ENCODE measurements at regions of chr19 and their contacts with region 1.

Region 1: DNA sequence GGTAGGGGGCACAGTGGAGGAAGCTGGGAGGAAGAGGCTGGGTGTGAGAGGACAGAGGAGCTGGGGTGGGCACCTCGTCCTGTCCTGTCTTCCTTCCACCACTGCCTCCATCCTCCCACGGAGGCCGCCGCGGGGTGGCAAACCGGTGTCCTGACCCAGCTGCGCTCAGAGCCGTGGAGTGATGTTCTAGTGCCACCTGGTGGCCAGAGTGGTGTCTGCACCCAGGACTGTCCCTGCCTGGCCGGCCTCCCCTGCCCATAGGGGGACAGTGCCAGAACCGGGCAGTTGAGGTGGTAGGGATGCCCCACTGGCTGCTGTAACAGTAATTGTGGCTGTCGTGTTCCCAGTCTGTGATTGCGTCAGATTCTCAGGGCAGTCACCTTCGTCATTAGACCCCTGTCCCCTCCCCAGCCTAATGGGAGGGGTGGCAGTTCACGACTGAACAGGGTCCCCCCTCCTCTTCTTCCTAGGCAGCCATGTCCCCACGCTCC is 11.1 kb upstream of the ARRDC2 start:
- DNase-seq: peak; percentile 67 to 96 (median 89)

Region 2: GRCh38 chr19:17938092-17938845 is 58.6 kb before region 1 on chr19:
- intact Hi-C with region 1: loop called (anchors 2 kb)
- DNase-seq: peak; percentile 68 to 93 (median 84)

Region 3: GRCh38 chr19:17947815-17948513 is 48.9 kb before region 1 on chr19:
- intact Hi-C with region 1: loop called (anchors 2 kb)
- DNase-seq: peak; percentile 56 to 96 (median 91)